PC-9 (cell line): ENCODE measurements at regions of chr17 and their contacts with region 1.

Region 1: GRCh38 chr17:81911277-81911961 is at the start of gene PCYT2:
- DNase-seq: peak; percentile 63 to 97
- H3K4me3 ChIP-seq: peak within 1 kb of the TSS; percentile 67
- H3K27ac ChIP-seq: peak within 1 kb of the TSS; percentile 59; the same call in 1 of the 2 replicates
- H3K4me1 ChIP-seq: peaks cover 35% of the 10 kb centered on the region
- H3K27me3 ChIP-seq: no peaks in the 10 kb centered on the region
- CTCF ChIP-seq: no peak; the same call in 1 of the 2 replicates
- total RNA-seq, gene PCYT2: 54.7 and 82.2 TPM in 2 replicates

Region 2: GRCh38 chr17:81322271-81323082 is 588.9 kb before region 1 on chr17:
- CTCF ChIA-PET with region 1: no interaction called
- POLR2A ChIA-PET with region 1: no interaction called
- intact Hi-C with region 1: no loop called
- DNase-seq: no peak
- H3K4me3 ChIP-seq: no peak overlapping the region
- H3K27ac ChIP-seq: no peak overlapping the region
- H3K4me1 ChIP-seq: peaks cover 5% of the 10 kb centered on the region
- H3K27me3 ChIP-seq: no peaks in the 10 kb centered on the region
- CTCF ChIP-seq: peak; percentile 53; the same call in 1 of the 2 replicates

Region 3: DNA sequence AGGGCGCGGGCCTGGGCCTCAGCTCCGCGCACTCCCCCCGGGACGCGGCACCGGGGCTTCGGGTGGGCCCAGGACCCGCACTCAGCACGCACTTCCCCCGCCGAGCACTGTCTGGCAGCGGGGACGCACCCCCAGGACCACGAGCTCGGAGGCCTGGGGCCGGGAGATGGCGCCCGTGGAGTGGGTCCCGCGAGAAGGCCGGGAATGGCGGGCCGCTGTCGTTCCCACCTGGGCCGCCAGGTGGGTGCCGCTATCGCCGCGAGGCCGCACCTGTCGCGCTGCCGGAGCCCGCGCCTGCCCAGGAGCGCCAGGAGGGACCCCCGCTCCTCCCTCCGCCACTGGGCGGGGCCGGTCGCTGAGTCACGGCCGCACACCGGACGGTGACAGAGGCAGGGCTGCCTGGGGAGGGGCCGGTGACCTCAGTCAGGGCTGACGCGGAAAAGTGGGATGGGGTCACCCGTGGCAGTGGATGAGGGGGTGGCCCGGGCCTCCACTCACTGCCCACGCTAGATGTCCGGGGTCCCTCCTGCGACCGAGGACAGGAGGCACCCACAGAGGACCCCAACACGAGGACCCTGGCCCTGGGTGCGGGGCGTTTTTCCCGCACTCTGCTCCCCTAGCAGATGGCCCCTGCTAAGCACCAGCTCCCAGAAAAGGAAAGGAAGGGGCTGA is 392.0 kb before region 1 on chr17:
- CTCF ChIA-PET with region 1: no interaction called
- POLR2A ChIA-PET with region 1: interaction called, 27 read pairs
- intact Hi-C with region 1: no loop called
- DNase-seq: peak; percentile 66 to 96
- H3K4me3 ChIP-seq: peak overlapping the region; percentile 65
- H3K27ac ChIP-seq: peak overlapping the region; percentile 45
- H3K4me1 ChIP-seq: peaks cover 25% of the 10 kb centered on the region
- H3K27me3 ChIP-seq: no peaks in the 10 kb centered on the region
- CTCF ChIP-seq: peak; percentile 64

Region 4: DNA sequence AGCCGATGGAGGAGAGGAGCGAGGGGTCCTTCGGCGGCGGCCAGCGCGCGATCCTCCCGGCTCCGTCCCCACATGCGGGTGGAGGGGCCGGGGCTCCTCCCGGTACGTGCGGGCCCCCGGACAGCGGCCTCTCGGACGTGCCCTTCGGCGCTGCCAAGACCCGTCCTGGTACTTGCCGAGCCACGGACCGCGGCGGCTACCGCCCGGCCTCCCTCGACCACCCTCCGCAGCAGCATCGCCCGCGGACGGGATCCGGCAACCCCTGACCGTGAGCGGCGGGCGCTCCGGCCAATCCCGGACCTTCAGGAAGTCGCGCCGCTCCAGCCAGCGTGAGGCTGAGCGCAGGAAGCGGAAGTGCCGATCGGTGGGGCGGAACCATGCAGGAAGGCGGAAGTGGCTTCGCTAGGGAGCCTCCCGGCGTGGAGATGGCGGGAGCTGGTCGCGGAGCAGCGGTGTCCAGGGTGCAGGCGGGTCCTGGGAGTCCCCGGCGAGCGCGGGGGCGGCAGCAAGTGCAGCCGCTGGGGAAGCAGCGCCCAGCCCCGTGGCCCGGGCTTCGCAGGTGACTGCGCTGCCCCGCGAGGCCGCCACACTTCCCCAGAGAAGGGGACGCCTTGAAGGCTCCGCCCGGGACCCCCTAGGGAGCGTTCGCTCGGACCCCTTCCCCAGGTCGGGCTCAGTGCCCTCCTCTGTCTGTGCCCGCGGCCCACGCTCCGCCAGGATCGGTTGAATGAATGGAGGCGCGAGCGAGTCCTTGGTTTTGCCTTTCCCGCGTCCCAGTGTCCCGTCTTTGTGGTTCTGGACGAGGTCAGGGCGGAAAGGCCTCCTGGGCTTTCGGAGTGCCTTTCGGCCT is 244.9 kb before region 1 on chr17 and contains the starts of genes CCDC137 and OXLD1:
- CTCF ChIA-PET with region 1: no interaction called
- POLR2A ChIA-PET with region 1: interaction called, 14 read pairs
- intact Hi-C with region 1: no loop called
- DNase-seq: peak; percentile 81 to 96
- H3K4me3 ChIP-seq: peak within 1 kb of the TSS; percentile 86
- H3K27ac ChIP-seq: peak within 1 kb of the TSS; percentile 19; the same call in 1 of the 2 replicates
- H3K4me1 ChIP-seq: peaks cover 10% of the 10 kb centered on the region
- H3K27me3 ChIP-seq: no peaks in the 10 kb centered on the region
- CTCF ChIP-seq: no peak
- total RNA-seq, gene CCDC137: 29.3 and 30.0 TPM in 2 replicates
- total RNA-seq, gene OXLD1: 40.2 and 66.0 TPM in 2 replicates

Region 5: GRCh38 chr17:81722184-81723120 is 189.0 kb before region 1 on chr17:
- CTCF ChIA-PET with region 1: no interaction called
- POLR2A ChIA-PET with region 1: interaction called, 29 read pairs
- intact Hi-C with region 1: no loop called
- DNase-seq: peak; percentile 79 to 99
- H3K4me3 ChIP-seq: no peak overlapping the region
- H3K27ac ChIP-seq: peak overlapping the region; percentile 68
- H3K4me1 ChIP-seq: peaks cover 27% of the 10 kb centered on the region
- H3K27me3 ChIP-seq: no peaks in the 10 kb centered on the region
- CTCF ChIP-seq: no peak

Region 6: GRCh38 chr17:81871387-81872230 is 39.8 kb before region 1 on chr17:
- CTCF ChIA-PET with region 1: no interaction called
- POLR2A ChIA-PET with region 1: no interaction called
- intact Hi-C with region 1: loop called (anchors 1 kb)
- DNase-seq: peak; percentile 47 to 91
- H3K4me3 ChIP-seq: peak overlapping the region; percentile 88
- H3K27ac ChIP-seq: peak overlapping the region; percentile 87
- H3K4me1 ChIP-seq: 0 out of 2 replicates have a peak, but pooled peaks cover 14% of the 10 kb centered on the region
- H3K27me3 ChIP-seq: no peaks in the 10 kb centered on the region
- CTCF ChIP-seq: no peak; the same call in 1 of the 2 replicates

Region 7: GRCh38 chr17:81890447-81891299 is 20.7 kb before region 1 on chr17:
- CTCF ChIA-PET with region 1: no interaction called
- POLR2A ChIA-PET with region 1: no interaction called
- intact Hi-C with region 1: loop called (anchors 1 kb)
- DNase-seq: no peak
- H3K4me3 ChIP-seq: peak overlapping the region; percentile 66
- H3K27ac ChIP-seq: no peak overlapping the region
- H3K4me1 ChIP-seq: peaks cover 21% of the 10 kb centered on the region
- H3K27me3 ChIP-seq: no peaks in the 10 kb centered on the region
- CTCF ChIP-seq: no peak

Region 8: DNA sequence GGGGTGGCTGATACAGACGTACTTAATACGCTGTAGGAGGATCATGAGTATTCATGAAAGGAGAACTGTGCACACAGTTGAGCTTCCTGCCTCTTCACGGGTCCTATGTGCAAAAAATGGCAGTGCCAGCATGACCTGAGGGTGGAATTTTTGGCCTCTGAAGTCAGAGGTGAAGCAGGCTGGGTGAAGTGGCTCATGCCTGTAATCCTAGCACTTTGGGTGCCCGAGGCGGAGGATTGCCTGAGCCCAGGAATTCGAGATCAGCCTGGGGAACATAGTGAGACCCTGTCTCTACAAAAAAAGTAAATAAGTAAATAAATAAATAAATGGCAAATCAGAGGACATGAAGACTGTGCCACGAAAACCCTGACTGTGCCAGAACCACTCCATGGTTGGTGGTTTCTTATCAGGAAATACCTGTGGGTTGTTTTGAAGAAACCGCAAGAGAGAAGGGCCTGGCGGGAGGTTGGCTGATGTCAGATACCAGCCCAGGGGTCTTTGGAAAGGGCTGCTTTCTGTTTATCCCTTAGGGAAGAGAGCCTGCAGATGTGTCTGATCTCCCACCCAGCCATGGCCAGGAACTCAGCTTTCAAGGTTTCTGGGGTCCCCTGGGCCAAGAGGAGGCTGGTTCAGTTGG is 69.4 kb after region 1 on chr17:
- CTCF ChIA-PET with region 1: no interaction called
- POLR2A ChIA-PET with region 1: no interaction called
- intact Hi-C with region 1: loop called (anchors 2 kb)
- DNase-seq: peak; percentile 87 to 92
- H3K4me3 ChIP-seq: no peak overlapping the region
- H3K27ac ChIP-seq: peak overlapping the region; percentile 86
- H3K4me1 ChIP-seq: peaks cover 33% of the 10 kb centered on the region
- H3K27me3 ChIP-seq: no peaks in the 10 kb centered on the region
- CTCF ChIP-seq: no peak